Activated CD8-positive, alpha-beta T cell treated with anti-CD3 and anti-CD28 coated beads for 36 hours (primary cell): ENCODE measurements at regions of chr10 and their contacts with region 1.

Region 1: DNA sequence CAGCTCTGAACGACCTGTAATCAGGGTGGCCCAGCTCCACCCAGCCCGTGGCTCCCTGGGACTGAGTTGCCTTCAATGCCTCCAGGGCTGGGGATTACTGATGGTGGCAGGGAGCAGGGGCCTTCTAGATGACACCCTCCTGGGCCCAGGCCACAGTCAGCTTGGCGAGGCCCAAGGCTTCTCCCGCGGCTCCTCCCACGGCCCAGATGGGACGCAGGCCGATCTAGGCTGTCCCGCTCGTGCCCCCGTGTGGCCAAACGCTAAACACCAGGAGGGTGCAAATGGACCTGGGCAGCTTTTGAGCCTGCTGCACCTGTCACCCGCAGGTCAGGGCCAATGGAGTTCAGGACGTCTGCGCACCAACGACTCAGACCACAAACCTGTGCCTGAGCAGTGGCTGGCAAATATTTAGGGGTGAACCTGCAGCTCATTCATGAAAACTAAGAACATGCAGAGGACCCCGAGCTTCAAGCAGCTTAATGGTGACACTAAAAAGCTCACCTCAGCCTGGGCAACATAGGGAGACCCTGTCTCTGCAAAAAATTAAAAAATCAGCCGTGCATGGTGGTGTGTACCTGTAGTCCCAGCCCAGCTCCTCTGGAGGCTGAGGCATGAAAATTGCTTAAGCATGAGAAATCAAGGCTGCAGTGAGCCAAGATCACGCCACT is 43.2 kb downstream of the ASB13 start:
- DNase-seq: peak; percentile 91
- ATAC-seq: peak; percentile 99
- H3K4me3 Mint-ChIP-seq: no peak overlapping the region
- H3K27ac Mint-ChIP-seq: no peak overlapping the region
- H3K4me1 Mint-ChIP-seq: no peaks in the 10 kb centered on the region
- H3K27me3 Mint-ChIP-seq: peaks cover 2% of the 10 kb centered on the region
- CTCF ChIP-seq: peak; percentile 84

Region 2: DNA sequence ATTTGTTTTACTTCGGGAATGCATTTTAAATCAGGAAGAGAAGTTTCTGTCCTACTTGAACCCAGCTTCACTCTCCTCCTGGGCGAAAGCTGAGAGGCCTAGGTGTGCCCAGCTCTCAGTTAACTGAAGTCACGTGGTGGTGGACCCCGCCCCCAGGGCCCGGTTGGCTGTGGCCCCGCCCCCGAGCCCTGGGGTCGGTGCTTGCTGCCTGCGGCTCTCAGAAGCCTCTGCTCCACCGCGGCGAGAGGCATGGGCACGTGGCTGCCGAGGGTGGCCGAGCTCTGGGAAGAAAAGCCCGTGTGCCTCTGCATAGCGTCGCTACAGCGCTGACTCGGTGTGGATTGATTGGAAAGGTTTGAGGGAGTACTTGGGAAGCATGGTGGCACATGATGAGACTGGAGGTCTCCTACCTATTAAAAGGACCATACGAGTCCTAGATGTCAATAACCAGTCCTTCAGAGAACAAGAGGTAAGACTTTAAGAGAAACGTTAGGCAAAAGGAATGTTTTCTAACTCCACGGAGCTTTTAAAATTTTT is 176.8 kb before region 1 on chr10:
- CTCF ChIA-PET with region 1: interaction called, 246 read pairs
- POLR2A ChIA-PET with region 1: interaction called, 3 read pairs
- intact Hi-C with region 1: loop called (anchors 2 kb)
- DNase-seq: peak; percentile 88
- ATAC-seq: peak; percentile 72
- H3K4me3 Mint-ChIP-seq: peak overlapping the region; percentile 79
- H3K27ac Mint-ChIP-seq: peak overlapping the region; percentile 75
- H3K4me1 Mint-ChIP-seq: peaks cover 49% of the 10 kb centered on the region
- H3K27me3 Mint-ChIP-seq: peaks cover 5% of the 10 kb centered on the region
- CTCF ChIP-seq: no peak

Region 3: DNA sequence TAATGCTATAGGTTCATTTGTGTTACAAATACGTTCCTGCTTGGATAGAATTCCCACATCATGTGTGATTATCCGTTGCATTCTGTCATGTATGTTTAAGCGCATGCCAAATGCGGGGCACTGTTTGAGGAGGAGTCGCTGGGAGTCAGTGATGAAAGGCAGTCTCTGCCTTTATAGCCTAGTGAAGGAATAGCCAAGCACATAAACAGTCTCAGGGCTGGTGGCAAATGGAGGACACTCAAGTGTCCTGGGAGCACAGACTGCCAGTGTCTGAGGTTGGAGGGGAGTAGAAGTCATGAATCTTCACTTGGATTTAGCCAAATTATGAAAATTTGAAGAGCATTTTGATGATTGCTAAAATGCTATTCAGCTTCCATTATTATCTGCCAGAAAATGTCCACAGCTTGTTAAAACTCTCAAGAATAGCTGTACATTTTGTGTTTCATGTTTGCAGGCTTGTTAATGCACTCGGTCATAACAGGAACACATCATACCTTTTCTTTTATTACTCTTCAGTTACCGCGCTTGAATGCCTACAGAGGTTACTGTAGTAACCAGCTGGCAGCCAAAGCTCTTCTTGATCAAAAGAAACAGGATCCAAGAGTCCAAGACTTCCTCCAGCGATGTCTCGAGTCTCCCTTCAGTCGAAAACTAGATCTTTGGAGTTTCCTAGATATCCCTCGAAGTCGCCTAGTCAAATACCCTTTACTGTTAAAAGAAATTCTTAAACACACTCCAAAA is 169.3 kb before region 1 on chr10:
- CTCF ChIA-PET with region 1: interaction called, 246 read pairs
- POLR2A ChIA-PET with region 1: no interaction called
- intact Hi-C with region 1: no loop called
- DNase-seq: no peak
- ATAC-seq: no peak
- H3K4me3 Mint-ChIP-seq: no peak overlapping the region
- H3K27ac Mint-ChIP-seq: no peak overlapping the region
- H3K4me1 Mint-ChIP-seq: peaks cover 12% of the 10 kb centered on the region
- H3K27me3 Mint-ChIP-seq: no peaks in the 10 kb centered on the region
- CTCF ChIP-seq: no peak

Region 4: GRCh38 chr10:5466418-5467154 is 156.6 kb before region 1 on chr10:
- CTCF ChIA-PET with region 1: interaction called, 12 read pairs
- POLR2A ChIA-PET with region 1: no interaction called
- intact Hi-C with region 1: no loop called
- DNase-seq: no peak
- ATAC-seq: peak; percentile 13
- H3K4me3 Mint-ChIP-seq: no peak overlapping the region
- H3K27ac Mint-ChIP-seq: no peak overlapping the region
- H3K4me1 Mint-ChIP-seq: no peaks in the 10 kb centered on the region
- H3K27me3 Mint-ChIP-seq: peaks cover 2% of the 10 kb centered on the region
- CTCF ChIP-seq: no peak

Region 5: GRCh38 chr10:5502061-5502902 is 120.9 kb before region 1 on chr10:
- CTCF ChIA-PET with region 1: interaction called, 10 read pairs
- POLR2A ChIA-PET with region 1: no interaction called
- intact Hi-C with region 1: no loop called
- DNase-seq: no peak
- ATAC-seq: no peak
- H3K4me3 Mint-ChIP-seq: no peak overlapping the region
- H3K27ac Mint-ChIP-seq: no peak overlapping the region
- H3K4me1 Mint-ChIP-seq: no peaks in the 10 kb centered on the region
- H3K27me3 Mint-ChIP-seq: peaks cover 9% of the 10 kb centered on the region
- CTCF ChIP-seq: no peak

Region 6: DNA sequence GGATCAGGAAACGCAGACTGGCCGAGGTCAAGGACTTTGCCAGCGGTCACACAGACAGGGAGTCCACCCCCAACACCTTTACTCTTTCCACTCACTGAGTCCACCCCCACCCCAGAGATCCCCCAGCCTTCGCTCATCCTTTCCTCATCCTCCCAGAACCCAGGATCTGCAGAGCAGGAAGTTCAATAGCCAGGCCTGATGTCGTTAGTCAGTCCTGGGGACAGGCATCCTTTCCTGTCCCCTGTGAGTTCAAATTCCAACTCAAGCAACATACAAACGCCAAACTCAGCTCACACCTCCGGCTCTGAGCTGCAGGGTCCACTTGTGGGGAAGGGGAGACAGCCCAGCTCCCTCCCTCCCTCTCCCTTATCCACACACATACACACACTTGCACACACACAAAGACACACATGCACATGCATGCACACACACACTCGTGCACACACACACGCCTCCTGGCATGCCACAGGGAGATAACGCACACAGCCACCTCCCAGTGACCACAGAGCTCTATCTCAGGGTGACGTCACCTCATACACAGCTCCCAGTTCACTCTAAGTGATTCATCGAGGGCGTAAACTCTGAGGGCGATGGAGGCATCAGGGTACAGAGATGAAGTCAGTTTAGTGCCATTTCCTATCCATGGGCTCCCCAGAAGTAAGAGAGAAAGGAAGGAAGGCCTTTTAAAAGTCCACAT is 74.5 kb before region 1 on chr10:
- CTCF ChIA-PET with region 1: interaction called, 18 read pairs
- POLR2A ChIA-PET with region 1: no interaction called
- intact Hi-C with region 1: no loop called
- DNase-seq: peak; percentile 84
- ATAC-seq: peak; percentile 93
- H3K4me3 Mint-ChIP-seq: no peak overlapping the region
- H3K27ac Mint-ChIP-seq: no peak overlapping the region
- H3K4me1 Mint-ChIP-seq: peaks cover 31% of the 10 kb centered on the region
- H3K27me3 Mint-ChIP-seq: no peaks in the 10 kb centered on the region
- CTCF ChIP-seq: no peak